ENCODE measurements at regions of chr20 and their contacts with region 1.

Region 1: DNA sequence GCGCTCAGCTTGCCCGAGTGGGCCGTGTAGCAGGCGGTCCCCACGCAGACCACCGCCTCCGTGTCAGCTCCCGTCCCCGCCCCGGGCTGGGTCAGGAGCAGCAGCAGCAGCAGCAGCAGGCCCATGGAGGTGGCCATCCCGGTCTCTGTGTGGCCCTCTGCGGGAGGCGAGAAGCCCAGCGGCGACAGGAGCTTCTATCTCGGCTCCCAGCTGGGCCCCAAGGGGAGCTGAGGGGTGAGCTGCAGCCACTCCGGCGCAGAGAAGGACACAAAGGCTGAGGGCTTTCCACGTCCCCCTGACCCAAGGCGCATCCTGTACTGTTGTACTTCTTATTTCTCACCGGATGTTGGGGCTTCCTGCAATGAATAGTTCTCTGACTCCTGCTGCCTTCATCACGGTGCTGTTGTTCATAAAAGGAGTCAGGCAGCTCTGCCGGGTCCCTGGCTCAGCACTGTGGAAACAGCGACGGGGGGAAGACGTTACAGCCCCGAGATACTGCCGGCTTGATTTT is at the start of gene CD93:
- DNase-seq: peak; percentile 95
- H3K4me3 ChIP-seq: peak within 1 kb of the TSS; percentile 30 to 93 (median 82)
- H3K27ac ChIP-seq: peak within 1 kb of the TSS; percentile 98
- H3K4me1 ChIP-seq: peaks cover 53% of the 10 kb centered on the region
- H3K27me3 ChIP-seq: no peaks in the 10 kb centered on the region
- CTCF ChIP-seq: peak in 1 of 2 donors; percentile 14
- POLR2A ChIP-seq: peak; percentile 68
- total RNA-seq, gene CD93: 346 and 413 TPM in 2 replicates

Region 2: DNA sequence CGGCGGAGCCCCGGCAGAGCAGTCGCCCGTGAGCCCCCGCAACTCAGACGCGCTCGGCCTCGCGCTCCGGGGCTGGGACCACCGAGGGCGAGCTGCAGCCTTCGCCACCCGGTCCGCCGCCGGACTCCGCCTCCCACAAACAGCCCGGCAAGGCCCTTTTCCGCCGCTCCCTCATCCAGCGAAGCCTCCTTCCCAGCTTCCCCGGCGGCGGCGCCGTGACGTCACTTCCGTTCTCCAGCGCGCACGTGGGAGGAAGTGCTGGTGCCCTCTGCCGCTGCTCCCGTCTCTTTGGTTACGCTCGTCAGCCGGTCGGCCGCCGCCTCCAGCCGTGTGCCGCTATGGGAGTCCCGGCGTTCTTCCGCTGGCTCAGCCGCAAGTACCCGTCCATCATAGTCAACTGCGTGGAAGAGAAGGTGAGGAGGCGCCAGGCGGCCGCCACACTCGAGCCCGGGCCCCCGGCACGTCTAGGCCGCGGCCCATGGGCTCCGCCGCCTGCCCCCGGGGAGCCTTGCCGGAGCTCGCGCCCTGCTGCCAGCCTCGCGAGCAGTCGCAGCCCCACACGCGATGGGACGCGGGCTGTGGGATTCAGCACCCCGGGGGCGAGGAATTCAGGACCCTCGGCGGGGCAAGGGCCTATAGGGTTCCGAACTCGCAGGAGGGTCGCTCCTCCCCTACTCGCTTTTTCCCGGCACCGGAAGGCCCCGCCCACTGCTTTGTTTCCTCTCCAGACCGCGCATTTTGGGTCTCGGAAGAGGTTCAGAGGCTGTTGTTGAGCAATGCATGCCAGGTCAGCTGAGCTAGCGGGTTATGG is 1782.8 kb before region 1 on chr20 and contains the start of gene XRN2:
- CTCF ChIA-PET with region 1: no interaction called
- POLR2A ChIA-PET with region 1: no interaction called
- dilution Hi-C with region 1: no loop called
- intact Hi-C with region 1: loop called (anchors 10 kb)
- DNase-seq: peak; percentile 95
- H3K4me3 ChIP-seq: peak within 1 kb of the TSS; percentile 34 to 94 (median 89)
- H3K27ac ChIP-seq: peak within 1 kb of the TSS; percentile 92
- H3K4me1 ChIP-seq: peaks cover 15% of the 10 kb centered on the region
- H3K27me3 ChIP-seq: peaks cover 6 to 12% of the 10 kb centered on the region in 2 experiments
- CTCF ChIP-seq: no peak
- POLR2A ChIP-seq: peak; percentile 93
- total RNA-seq, gene XRN2: 62.5 and 66.6 TPM in 2 replicates

Region 3: GRCh38 chr20:22836877-22837276 is 249.2 kb before region 1 on chr20:
- CTCF ChIA-PET with region 1: no interaction called
- POLR2A ChIA-PET with region 1: no interaction called
- dilution Hi-C with region 1: no loop called
- intact Hi-C with region 1: no loop called
- DNase-seq: no peak
- H3K4me3 ChIP-seq: no peak overlapping the region
- H3K27ac ChIP-seq: no peak overlapping the region
- H3K4me1 ChIP-seq: no peaks in the 10 kb centered on the region
- H3K27me3 ChIP-seq: peaks cover under 1 to 2% of the 10 kb centered on the region in 2 experiments
- CTCF ChIP-seq: no peak
- POLR2A ChIP-seq: no peak

Region 4: DNA sequence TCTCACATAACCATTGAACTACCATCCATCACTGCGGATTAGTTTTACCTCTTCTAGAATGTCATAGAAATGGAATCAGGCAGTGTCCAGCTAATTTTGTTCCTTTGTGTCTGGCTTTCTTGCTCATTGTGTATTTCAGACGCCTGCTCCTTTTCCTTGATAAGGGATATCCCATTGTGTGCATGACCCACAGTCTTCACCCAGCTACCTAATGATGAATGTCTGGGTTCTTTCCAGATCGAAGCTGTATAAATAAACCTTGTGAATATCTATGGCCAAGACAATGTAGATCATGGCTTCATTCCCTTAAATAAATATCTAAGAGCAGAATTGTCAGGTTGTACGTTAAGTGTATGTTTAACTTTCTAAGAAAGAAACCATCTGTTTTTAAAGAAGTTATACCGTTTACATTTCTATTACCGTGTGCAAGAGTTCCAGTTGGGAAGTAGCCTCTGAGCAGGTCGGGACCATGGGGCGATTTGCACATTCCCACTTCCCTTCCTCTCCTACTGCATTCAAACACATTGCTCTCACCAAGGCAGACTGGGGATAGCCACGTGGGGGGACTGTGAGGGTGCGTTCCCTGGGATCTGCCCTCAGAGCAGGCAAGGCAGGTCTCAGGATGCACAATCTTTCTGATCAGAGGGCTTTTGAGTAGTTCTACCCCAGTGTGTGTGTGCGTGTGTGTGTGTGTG is 13.1 kb before region 1 on chr20:
- CTCF ChIA-PET with region 1: interaction called, 3 read pairs
- POLR2A ChIA-PET with region 1: no interaction called
- dilution Hi-C with region 1: no loop called
- intact Hi-C with region 1: loop called (anchors 1 kb)
- DNase-seq: peak; percentile 97
- H3K4me3 ChIP-seq: no peak overlapping the region
- H3K27ac ChIP-seq: peak overlapping the region; percentile 76
- H3K4me1 ChIP-seq: peaks cover 20% of the 10 kb centered on the region
- H3K27me3 ChIP-seq: no peaks in the 10 kb centered on the region
- CTCF ChIP-seq: no peak
- POLR2A ChIP-seq: no peak

Region 5: DNA sequence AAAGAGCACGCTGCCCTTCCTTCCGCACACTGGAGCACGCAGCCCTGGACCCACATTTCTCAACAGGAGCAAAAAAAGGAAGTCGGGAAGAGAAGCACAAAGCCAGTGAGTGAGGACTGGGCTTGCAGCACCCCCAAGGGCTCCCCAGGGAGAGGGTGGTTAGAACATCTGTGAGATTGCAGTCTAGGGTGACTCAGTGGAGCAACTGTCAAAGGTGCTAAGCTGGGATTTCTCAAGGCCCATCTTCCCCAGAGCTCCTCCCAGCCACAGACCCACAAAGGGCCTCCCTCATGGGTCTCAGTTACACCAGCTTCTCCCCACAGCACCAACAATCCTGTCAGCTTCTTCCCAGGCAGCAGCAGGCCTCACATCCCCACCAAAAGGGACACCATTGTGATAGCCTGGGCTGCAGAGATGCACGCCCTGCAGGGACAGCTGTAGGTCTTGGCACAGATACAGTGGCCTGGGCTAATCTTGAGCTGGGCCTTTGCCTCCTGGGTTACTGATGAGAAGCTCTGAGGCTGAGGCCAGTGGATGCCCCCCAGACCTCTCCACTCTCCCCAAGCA is 39.6 kb after region 1 on chr20:
- CTCF ChIA-PET with region 1: no interaction called
- POLR2A ChIA-PET with region 1: no interaction called
- dilution Hi-C with region 1: no loop called
- intact Hi-C with region 1: no loop called
- DNase-seq: no peak
- H3K4me3 ChIP-seq: no peak overlapping the region
- H3K27ac ChIP-seq: no peak overlapping the region
- H3K4me1 ChIP-seq: peaks cover 5% of the 10 kb centered on the region
- H3K27me3 ChIP-seq: no peaks in the 10 kb centered on the region
- CTCF ChIP-seq: no peak
- POLR2A ChIP-seq: no peak

Region 6: DNA sequence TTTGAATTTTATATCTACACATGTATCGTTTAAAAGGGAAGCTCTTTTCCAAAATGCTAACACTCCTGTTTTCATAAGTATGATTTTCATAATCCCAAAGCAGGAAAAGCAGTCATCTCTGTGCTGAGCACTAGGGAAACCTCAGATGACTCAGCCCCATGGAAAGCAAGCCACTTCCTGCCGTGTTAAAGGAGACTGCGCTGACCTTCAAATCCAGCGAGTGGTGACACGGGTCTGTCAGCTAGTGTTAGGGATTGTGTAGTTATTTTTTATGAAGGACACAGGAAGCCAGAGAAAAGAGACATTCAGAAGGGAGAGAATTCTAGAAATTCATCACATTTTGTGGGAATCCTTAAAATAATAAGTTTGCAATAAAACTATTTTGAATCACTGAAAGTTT is 57.0 kb after region 1 on chr20:
- CTCF ChIA-PET with region 1: interaction called, 25 read pairs
- POLR2A ChIA-PET with region 1: interaction called, 8 read pairs
- dilution Hi-C with region 1: no loop called
- intact Hi-C with region 1: loop called (anchors 1 kb)
- DNase-seq: peak; percentile 94
- H3K4me3 ChIP-seq: no peak overlapping the region
- H3K27ac ChIP-seq: peak overlapping the region; percentile 88
- H3K4me1 ChIP-seq: peaks cover 77% of the 10 kb centered on the region
- H3K27me3 ChIP-seq: no peaks in the 10 kb centered on the region
- CTCF ChIP-seq: no peak
- POLR2A ChIP-seq: no peak

Region 7: DNA sequence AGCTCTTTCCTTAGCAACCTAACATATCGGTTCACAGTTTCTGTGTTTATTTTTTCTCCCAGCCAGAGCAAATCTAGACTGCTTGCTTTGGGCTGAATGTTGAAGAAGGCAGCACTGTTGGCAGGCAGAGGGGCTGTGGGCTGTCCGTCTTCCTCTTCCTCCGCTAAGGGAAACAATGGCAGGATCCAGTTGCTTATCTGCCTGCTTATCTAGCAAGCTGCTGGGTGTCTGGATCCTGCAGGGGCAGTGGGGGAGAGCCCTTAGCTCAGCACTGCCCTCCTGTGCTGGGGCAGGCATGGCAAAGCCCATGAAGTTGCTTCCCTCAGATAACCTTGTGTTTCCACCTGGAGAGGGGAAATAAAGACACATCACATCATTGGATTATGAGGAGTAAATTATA is 92.7 kb after region 1 on chr20:
- CTCF ChIA-PET with region 1: interaction called, 26 read pairs
- POLR2A ChIA-PET with region 1: interaction called, 10 read pairs
- dilution Hi-C with region 1: no loop called
- intact Hi-C with region 1: loop called (anchors 1 kb)
- DNase-seq: peak; percentile 96
- H3K4me3 ChIP-seq: no peak overlapping the region
- H3K27ac ChIP-seq: peak overlapping the region; percentile 56
- H3K4me1 ChIP-seq: peaks cover 21% of the 10 kb centered on the region
- H3K27me3 ChIP-seq: peaks cover 0 to 2% of the 10 kb centered on the region in 2 experiments
- CTCF ChIP-seq: peak; percentile 43 to 80
- POLR2A ChIP-seq: peak; percentile 49

Region 8: DNA sequence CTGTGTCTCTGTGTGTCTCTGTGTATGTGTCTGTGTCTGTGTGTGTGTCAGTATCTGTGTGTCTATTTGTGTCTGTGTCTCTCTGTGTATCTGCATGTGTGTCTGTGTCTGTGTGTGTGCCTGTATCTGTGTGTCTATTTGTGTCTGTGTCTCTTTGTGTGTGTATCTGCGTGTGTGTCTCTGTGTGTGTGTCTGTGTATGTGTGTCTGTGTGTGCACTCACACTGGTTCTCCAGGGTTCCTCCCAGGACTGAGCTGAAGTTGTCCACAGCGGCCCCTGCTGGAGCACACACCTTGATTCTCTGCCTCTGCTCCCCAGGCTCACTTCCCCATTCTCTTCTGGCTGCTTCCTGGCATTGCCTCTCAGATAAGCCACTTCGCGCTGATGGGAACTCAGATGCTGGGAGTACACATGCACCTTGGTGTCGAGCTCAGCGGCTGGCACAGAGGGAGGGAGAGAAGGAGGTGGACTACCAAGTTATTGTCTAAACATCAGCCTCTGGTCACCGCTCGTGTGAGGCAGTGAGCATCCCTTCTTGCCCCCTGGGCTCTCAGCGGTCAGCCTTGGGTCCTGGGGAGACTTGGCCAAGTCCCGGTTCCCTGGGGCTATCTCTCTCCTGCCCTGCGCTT is 159.6 kb after region 1 on chr20:
- CTCF ChIA-PET with region 1: interaction called, 11 read pairs
- POLR2A ChIA-PET with region 1: no interaction called
- dilution Hi-C with region 1: no loop called
- intact Hi-C with region 1: no loop called
- DNase-seq: peak; percentile 77
- H3K4me3 ChIP-seq: no peak overlapping the region
- H3K27ac ChIP-seq: no peak overlapping the region
- H3K4me1 ChIP-seq: no peaks in the 10 kb centered on the region
- H3K27me3 ChIP-seq: no peaks in the 10 kb centered on the region
- CTCF ChIP-seq: peak; percentile 67 to 88
- POLR2A ChIP-seq: no peak

Region 9: GRCh38 chr20:23350196-23350903 is 264.2 kb after region 1 on chr20 and contains the start of gene NXT1:
- CTCF ChIA-PET with region 1: interaction called, 3 read pairs
- POLR2A ChIA-PET with region 1: no interaction called
- dilution Hi-C with region 1: no loop called
- intact Hi-C with region 1: loop called (anchors 1 kb)
- DNase-seq: peak; percentile 98
- H3K4me3 ChIP-seq: peak within 1 kb of the TSS; percentile 20 to 79 (median 77)
- H3K27ac ChIP-seq: peak within 1 kb of the TSS; percentile 94
- H3K4me1 ChIP-seq: peaks cover 19% of the 10 kb centered on the region
- H3K27me3 ChIP-seq: no peaks in the 10 kb centered on the region
- CTCF ChIP-seq: no peak
- POLR2A ChIP-seq: peak; percentile 19
- total RNA-seq, gene NXT1: 27.1 and 28.5 TPM in 2 replicates

Measured in endothelial cell of umbilical vein (primary cell).